ENCODE measurements at regions of chr16 and their contacts with region 1.

Region 1: GRCh38 chr16:25224731-25225319 is 8.1 kb downstream of the AQP8 start:
- DNase-seq: no peak
- H3K4me3 ChIP-seq: no peak overlapping the region
- CTCF ChIP-seq: no peak

Region 2: GRCh38 chr16:25126820-25127232 is 98.0 kb before region 1 on chr16:
- CTCF ChIA-PET with region 1: interaction called, 77 read pairs
- POLR2A ChIA-PET with region 1: no interaction called
- DNase-seq: peak; percentile 44
- H3K4me3 ChIP-seq: no peak overlapping the region
- CTCF ChIP-seq: peak; percentile 49

Region 3: DNA sequence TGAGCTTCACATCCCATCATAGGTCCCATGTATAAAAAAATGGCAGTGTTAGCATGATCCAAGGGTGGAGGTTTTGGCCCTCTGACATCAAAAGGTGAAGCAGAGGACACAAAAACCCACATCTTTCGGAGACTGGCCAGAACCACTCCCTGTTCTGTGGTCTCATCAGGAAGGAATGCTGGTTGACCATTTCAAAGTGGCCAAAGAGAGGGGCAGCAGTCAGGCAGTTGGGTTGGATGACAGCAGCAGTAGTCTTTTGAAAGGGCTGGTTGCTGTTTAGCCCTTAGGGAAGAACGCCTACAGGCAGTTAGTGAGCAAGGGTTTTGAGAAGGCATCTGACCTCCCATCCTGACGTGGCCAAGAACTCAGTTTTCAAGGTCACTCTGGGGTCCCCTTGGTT is 72.8 kb before region 1 on chr16:
- CTCF ChIA-PET with region 1: interaction called, 15 read pairs
- POLR2A ChIA-PET with region 1: no interaction called
- DNase-seq: no peak
- H3K4me3 ChIP-seq: no peak overlapping the region
- CTCF ChIP-seq: no peak

Region 4: GRCh38 chr16:25198021-25198420 is 26.8 kb before region 1 on chr16:
- CTCF ChIA-PET with region 1: interaction called, 77 read pairs
- POLR2A ChIA-PET with region 1: no interaction called
- DNase-seq: no peak
- H3K4me3 ChIP-seq: no peak overlapping the region
- CTCF ChIP-seq: no peak

Region 5: GRCh38 chr16:25235991-25236390 is 11.2 kb after region 1 on chr16:
- CTCF ChIA-PET with region 1: interaction called, 135 read pairs
- POLR2A ChIA-PET with region 1: interaction called, 5 read pairs
- DNase-seq: peak; percentile 9
- H3K4me3 ChIP-seq: no peak overlapping the region
- CTCF ChIP-seq: no peak

Region 6: DNA sequence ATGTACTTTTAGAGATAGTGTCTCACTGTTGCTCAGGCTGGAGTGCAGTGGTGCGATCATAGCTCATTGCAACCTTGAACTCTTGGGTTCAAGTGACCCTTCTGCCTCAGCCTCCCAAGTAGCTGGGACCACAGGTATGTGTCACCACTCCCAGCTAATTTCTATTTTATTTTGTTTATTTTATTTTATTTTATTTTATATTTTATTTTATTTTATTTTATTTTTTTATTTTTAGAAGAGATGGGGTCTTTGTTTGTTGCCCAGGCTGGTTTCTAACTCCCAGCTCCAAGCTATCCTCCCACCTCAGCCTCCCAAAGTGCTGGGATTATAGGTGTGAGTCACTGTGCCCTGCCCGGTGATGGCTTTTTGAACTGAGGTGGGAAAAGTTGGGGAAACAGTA is 431.8 kb after region 1 on chr16:
- CTCF ChIA-PET with region 1: no interaction called
- POLR2A ChIA-PET with region 1: no interaction called
- DNase-seq: no peak
- H3K4me3 ChIP-seq: no peak overlapping the region
- CTCF ChIP-seq: no peak